PC-3 (cell line): ENCODE measurements at regions of chr10 and their contacts with region 1.

Region 1: DNA sequence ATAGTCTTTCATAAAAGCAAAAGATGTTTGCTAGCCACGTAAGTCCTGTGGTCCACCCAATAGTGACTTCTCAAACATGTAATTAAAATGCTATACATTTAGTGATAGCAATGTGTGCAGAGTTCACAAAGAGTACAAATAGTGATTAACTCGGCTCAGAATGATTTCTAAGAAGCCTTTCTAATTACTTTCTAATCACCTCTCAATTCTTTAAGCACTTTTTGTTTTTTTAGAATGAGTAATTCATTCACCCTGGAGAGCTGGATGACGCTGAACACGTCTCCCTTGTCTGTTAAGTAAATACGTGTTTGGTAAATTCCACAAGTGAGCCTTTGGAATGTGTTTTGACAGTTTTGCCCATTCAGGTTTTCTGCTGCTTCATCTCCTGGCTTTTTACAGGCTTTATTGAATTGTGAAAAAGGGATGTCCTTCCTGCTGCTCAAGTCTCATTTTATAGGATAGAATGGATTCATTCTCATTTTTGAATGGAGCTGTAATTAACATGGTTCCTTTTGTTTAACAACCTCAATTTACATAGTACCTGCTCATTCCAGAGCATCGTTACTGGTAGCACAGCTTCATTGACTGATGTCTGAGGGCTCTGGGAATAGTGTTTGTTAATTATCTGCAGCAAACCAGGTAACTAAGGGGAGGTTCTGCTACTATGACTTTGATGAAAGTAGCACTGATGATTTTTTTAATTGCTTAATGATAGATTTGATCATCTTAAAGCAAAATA is 212.1 kb downstream of the VTI1A start:
- DNase-seq: peak; percentile 80
- ATAC-seq: peak; percentile 73
- H3K4me3 ChIP-seq: peak overlapping the region; percentile 40; the same call in 1 of the 2 replicates
- H3K27ac ChIP-seq: peak overlapping the region; percentile 90
- H3K4me1 ChIP-seq: peaks cover 43% of the 10 kb centered on the region
- H3K27me3 ChIP-seq: no peaks in the 10 kb centered on the region
- CTCF ChIP-seq: no peak

Region 2: GRCh38 chr10:111725050-111725449 is 934.0 kb before region 1 on chr10:
- CTCF ChIA-PET with region 1: no interaction called
- POLR2A ChIA-PET with region 1: no interaction called
- intact Hi-C with region 1: no loop called
- DNase-seq: no peak
- ATAC-seq: no peak
- H3K4me3 ChIP-seq: no peak overlapping the region
- H3K27ac ChIP-seq: no peak overlapping the region
- H3K4me1 ChIP-seq: no peaks in the 10 kb centered on the region
- H3K27me3 ChIP-seq: no peaks in the 10 kb centered on the region
- CTCF ChIP-seq: no peak

Region 3: DNA sequence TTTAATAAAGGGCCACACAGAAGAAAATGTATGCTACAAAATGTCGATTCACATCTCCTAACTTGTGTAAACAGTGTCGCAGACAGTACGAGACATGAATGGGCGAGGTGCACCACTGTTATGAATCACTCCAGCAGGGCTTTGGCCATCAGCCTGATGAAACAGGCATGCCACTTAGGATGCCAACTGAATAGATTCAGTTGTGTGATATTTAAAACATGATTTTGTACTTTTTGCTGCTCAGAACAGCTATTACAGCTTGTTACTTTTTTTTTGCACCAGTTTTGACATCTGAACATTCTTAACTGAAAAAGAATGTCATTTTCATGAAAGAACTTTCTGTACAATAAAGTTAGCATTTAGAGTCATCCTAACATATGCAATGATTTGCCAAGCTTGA is 73.9 kb before region 1 on chr10:
- CTCF ChIA-PET with region 1: no interaction called
- POLR2A ChIA-PET with region 1: no interaction called
- intact Hi-C with region 1: loop called (anchors 5 kb)
- DNase-seq: peak; percentile 77
- ATAC-seq: peak; percentile 87
- H3K4me3 ChIP-seq: no peak overlapping the region
- H3K27ac ChIP-seq: peak overlapping the region; percentile 40
- H3K4me1 ChIP-seq: peaks cover 34% of the 10 kb centered on the region
- H3K27me3 ChIP-seq: no peaks in the 10 kb centered on the region
- CTCF ChIP-seq: no peak

Region 4: DNA sequence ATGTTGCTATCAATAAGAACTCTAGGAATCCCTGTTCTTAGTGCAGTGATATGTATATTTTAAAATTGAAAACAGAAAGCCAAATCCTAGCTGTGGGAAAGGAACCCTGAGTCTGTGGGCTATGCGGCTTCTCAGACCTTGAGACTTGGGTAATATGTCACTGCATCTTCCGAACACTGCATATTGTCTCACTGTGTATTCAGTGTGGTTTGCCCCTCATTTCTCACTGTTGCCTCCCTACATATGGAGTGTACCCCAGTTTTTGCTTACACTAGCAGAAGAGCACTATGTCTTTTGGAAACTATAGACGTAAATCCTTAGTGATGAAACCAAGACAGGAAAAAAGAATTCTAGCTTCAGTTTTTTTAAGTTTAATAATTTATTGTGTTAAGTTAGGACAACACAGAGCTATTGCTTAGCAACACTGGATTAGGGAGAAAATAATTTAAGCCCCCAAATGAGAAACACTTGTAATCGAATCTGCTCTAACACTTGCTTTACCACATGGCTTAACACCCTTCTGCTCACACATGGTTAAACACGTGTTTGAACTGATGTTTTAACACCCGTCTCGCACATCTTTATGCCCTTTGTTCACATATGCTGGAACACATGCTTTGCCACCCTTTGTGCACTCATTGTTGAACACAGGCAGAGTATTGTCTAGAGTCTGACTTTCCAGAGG is 39.2 kb after region 1 on chr10:
- CTCF ChIA-PET with region 1: no interaction called
- POLR2A ChIA-PET with region 1: no interaction called
- intact Hi-C with region 1: no loop called
- DNase-seq: no peak
- ATAC-seq: no peak
- H3K4me3 ChIP-seq: no peak overlapping the region
- H3K27ac ChIP-seq: no peak overlapping the region
- H3K4me1 ChIP-seq: no peaks in the 10 kb centered on the region
- H3K27me3 ChIP-seq: no peaks in the 10 kb centered on the region
- CTCF ChIP-seq: no peak

Region 5: GRCh38 chr10:112981553-112981952 is 322.5 kb after region 1 on chr10:
- CTCF ChIA-PET with region 1: no interaction called
- POLR2A ChIA-PET with region 1: no interaction called
- intact Hi-C with region 1: no loop called
- DNase-seq: no peak
- ATAC-seq: no peak
- H3K4me3 ChIP-seq: no peak overlapping the region
- H3K27ac ChIP-seq: no peak overlapping the region
- H3K4me1 ChIP-seq: no peaks in the 10 kb centered on the region
- H3K27me3 ChIP-seq: no peaks in the 10 kb centered on the region
- CTCF ChIP-seq: no peak

Region 6: DNA sequence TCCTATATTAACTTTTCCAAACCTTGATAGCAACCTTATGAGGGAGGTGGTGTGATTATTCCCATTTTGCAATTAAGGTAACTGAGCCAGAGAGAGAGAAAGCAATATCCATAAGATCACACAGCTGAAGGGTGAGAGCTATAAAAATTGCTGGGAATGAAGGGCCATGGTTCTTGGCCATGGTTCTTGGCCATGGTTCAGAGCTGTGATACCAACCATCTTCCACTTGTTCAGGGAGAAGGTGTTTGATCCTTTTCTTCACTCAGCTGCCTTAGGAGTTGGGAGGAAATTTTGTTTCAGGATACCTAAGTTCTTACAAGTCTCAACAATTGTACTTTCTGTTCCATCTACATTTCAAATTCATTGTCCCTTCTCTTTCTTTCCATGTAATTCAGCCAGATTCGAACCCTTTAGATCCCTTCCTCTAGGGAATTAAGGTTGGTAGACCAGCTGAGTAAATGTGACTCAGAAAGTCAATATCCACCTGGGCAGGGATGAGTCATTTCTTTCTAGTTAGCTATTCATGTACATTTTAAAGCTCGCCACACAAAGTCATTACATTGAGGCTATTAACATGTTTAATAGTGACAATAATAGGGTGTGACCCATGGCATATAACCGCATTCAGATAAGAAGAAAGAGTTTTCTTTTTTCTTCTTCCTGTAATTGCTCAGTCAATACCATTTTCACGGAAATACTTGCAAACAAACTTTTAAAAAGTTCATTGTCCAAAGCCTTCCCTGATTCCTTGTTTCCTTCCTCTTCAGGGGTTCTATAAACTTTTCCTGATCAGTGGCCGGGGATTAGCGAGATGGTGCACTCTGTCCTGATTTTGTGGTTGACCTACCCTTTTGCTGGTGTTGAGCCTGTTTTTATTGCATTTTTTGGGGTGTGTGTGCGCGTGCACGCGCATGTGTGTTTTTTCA is 434.4 kb after region 1 on chr10:
- CTCF ChIA-PET with region 1: no interaction called
- POLR2A ChIA-PET with region 1: no interaction called
- intact Hi-C with region 1: loop called (anchors 10 kb)
- DNase-seq: peak; percentile 93
- ATAC-seq: peak; percentile 74
- H3K4me3 ChIP-seq: peak overlapping the region; percentile 46
- H3K27ac ChIP-seq: peak overlapping the region; percentile 98
- H3K4me1 ChIP-seq: peaks cover 46% of the 10 kb centered on the region
- H3K27me3 ChIP-seq: no peaks in the 10 kb centered on the region
- CTCF ChIP-seq: no peak